ENCODE measurements at regions of chr9 and their contacts with region 1.

Region 1: DNA sequence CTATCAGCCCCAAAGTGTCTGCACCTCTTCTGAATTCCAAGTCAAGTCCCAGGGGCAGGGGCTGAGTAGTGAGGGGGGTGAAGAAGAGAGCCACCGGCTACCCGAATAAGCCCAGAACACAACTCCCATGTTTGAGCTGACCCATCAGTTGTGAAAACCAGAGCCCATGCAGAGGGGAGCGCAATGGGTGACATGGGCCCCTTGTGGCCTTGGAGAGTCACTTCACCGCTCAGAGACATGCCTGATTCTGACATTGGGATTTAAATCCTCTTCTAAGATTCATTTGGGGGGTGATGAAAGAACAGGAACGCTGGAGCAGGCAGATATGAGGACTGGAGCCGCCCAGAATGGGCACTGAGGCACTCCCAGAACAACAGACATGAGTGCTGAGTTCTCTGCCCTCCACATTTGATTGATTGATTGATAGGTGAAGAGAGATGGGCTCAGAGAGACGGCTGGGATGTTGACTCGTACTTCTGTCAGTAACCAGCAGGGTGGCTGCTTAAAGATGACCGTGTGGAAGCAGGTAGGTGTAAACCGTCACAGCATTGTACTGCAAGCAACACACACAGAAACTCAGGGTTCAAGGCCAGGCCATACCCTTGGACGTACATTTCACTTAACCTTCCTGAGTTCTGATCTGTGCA is 74.3 kb downstream of the GPR21 start:
- DNase-seq: no peak
- ATAC-seq: no peak

Region 2: DNA sequence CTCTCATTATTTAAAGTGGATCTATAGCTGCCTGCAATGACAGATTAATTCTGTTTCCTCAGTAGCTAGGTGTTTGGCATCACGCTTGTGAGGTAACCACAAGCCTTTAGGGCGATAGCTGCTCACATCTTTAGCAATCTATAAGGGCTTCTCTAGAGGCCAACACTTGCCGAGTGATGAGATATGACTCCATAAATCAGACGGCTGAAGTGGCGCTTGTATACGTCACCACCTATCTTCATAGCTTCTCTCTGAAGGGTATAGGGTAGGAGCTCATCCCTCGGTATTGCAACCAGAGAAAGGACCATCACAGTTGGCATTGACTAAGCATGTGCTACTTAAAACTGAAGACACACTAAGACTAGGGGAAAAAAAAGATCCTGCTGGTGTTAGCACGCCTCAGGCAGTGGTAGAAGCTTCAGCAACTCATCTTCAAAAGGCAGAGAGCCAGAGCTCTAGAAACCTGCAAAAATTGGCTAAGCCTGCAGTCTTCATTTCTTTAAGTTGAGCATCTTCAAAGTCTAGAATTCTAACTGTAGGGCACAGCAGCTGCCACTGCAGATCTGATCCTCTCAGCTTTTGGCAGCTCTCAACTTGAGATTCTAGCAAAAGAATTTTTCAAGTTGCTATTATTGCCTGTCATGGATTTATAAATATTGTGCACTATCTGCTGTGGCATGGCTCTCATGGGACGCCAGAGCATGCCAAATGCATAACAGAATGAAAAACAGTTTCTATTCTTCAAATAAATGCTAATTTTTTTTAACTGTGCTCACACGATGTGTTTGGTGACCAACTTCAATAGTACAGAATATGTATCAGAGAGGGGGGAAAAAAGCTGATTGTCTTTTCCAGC is 1270.0 kb after region 1 on chr9:
- intact Hi-C with region 1: loop called (anchors 5 kb)
- DNase-seq: no peak
- ATAC-seq: no peak